ENCODE measurements at regions of chr1 and their contacts with region 1.

Region 1: GRCh38 chr1:33094971-33095604 is 14.1 kb downstream of the AZIN2 start:
- DNase-seq: no peak
- H3K4me3 ChIP-seq: no peak overlapping the region
- CTCF ChIP-seq: peak; percentile 83

Region 2: GRCh38 chr1:33039786-33040185 is 55.3 kb before region 1 on chr1:
- CTCF ChIA-PET with region 1: no interaction called
- POLR2A ChIA-PET with region 1: no interaction called
- DNase-seq: no peak
- H3K4me3 ChIP-seq: no peak overlapping the region
- CTCF ChIP-seq: no peak

Region 3: GRCh38 chr1:33080885-33081553 is 14.1 kb before region 1 on chr1 and contains the start of gene AZIN2:
- CTCF ChIA-PET with region 1: interaction called, 185 read pairs
- POLR2A ChIA-PET with region 1: interaction called, 12 read pairs
- DNase-seq: peak; percentile 60
- H3K4me3 ChIP-seq: peak within 1 kb of the TSS; percentile 79
- CTCF ChIP-seq: no peak

Region 4: GRCh38 chr1:33111970-33112369 is 16.9 kb after region 1 on chr1:
- CTCF ChIA-PET with region 1: interaction called, 14 read pairs
- POLR2A ChIA-PET with region 1: no interaction called
- DNase-seq: no peak
- H3K4me3 ChIP-seq: no peak overlapping the region
- CTCF ChIP-seq: peak; percentile 26

Region 5: GRCh38 chr1:33127001-33127791 is 32.1 kb after region 1 on chr1:
- CTCF ChIA-PET with region 1: interaction called, 66 read pairs
- POLR2A ChIA-PET with region 1: interaction called, 18 read pairs
- DNase-seq: peak; percentile 96
- H3K4me3 ChIP-seq: peak overlapping the region; percentile 75
- CTCF ChIP-seq: peak; percentile 94

Region 6: GRCh38 chr1:33147997-33148314 is 52.9 kb after region 1 on chr1:
- CTCF ChIA-PET with region 1: interaction called, 20 read pairs
- POLR2A ChIA-PET with region 1: no interaction called
- DNase-seq: no peak
- H3K4me3 ChIP-seq: no peak overlapping the region
- CTCF ChIP-seq: peak; percentile 34

Region 7: DNA sequence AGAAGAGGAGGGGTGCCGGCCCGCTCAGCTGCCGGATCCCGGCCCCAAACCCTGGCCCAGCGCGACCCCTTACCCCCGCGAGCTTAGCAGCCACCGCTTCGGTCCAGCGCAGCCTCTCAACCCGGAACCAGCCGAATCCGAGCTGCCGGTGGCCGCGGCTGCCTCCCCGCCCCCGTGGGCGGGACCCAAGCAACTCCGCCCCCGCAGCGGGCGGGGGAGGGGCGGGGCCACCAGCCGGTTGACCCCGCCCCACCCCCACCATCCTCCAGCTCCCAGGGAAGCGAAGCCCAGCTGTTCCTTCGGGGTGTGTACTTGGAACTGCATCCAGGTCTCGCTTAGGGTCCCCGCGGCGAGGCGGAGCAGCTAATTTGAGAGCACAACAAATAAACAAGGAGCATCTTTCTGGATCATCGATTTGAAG is 86.8 kb after region 1 on chr1 and contains the start of gene TRIM62:
- CTCF ChIA-PET with region 1: no interaction called
- POLR2A ChIA-PET with region 1: interaction called, 10 read pairs
- DNase-seq: no peak
- H3K4me3 ChIP-seq: peak within 1 kb of the TSS; percentile 86
- CTCF ChIP-seq: no peak

Measured in AG04449 (cell line).